Mammary epithelial cell (primary cell): ENCODE measurements at regions of chr4 and their contacts with region 1.

Region 1: DNA sequence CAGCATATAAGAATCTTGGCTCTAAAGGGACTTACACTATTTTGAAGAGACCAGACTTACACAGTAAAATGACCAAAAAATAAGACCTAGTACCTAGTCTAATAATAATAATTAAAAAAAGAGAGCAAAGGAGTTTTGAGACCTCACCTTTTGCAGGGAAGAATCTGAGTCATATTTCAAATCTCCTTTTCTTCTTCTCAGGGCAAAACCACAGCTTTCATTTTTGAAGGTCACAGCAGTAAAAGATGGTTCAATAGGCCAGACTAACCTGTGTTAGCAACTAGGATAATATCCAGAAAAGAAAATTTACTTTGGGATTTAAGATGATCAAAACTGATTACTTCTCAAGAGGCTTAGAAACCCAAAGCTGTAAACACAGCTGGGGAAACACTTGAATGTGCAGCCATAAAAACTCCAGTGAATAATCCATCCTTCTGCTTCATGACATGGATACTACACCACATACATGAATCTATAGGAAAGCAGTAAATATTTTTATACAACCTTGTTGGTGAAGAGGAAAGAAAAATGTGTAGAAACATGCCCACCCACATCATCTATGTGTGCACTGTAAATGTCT is 25.9 kb upstream of the LNX1 start:
- DNase-seq: no peak
- H3K4me3 ChIP-seq: no peak overlapping the region
- H3K27ac ChIP-seq: no peak overlapping the region
- H3K4me1 ChIP-seq: peaks cover 4% of the 10 kb centered on the region
- H3K27me3 ChIP-seq: no peaks in the 10 kb centered on the region
- CTCF ChIP-seq: no peak

Region 2: DNA sequence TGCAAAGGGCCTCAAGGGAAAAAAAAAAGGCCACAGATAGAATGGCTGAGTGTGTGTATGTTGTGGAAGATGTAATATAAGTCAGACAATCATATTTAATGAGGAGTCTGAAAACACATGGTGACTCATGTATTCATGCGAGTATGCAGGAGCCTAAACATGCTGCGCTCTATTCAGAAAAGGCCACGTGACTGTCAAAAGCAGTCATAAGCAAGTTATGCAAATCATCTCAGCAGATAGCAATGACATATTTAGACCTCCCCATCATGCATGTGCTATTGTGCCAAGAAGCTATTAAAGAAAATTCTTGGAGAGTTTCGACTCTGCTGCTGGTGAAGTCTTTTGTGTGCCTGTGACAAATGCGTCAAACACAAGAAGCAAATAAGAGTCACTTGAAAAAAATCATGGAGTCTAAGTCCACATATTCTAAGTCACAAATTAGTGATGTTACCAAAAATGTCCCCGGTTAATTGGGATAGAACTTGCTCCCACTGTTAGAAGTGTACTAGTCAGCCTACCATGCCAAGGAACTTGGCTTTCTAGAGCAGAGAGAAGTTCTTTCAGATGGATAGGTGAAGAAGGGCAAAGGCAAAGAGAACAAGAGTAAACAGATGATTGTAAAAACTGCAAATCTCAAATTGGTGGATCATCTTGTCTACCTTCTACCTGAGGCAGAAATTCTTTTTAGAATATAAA is 30.9 kb before region 1 on chr4:
- CTCF ChIA-PET with region 1: no interaction called
- dilution Hi-C with region 1: no loop called
- in situ Hi-C with region 1: no loop called
- intact Hi-C with region 1: no loop called
- DNase-seq: peak; percentile 74
- H3K4me3 ChIP-seq: no peak overlapping the region
- H3K27ac ChIP-seq: no peak overlapping the region
- H3K4me1 ChIP-seq: peaks cover 2% of the 10 kb centered on the region
- H3K27me3 ChIP-seq: no peaks in the 10 kb centered on the region
- CTCF ChIP-seq: no peak

Region 3: GRCh38 chr4:53659737-53660136 is 42.5 kb after region 1 on chr4:
- CTCF ChIA-PET with region 1: no interaction called
- dilution Hi-C with region 1: loop called (anchors 5 kb)
- in situ Hi-C with region 1: no loop called
- intact Hi-C with region 1: no loop called
- DNase-seq: no peak
- H3K4me3 ChIP-seq: no peak overlapping the region
- H3K27ac ChIP-seq: no peak overlapping the region
- H3K4me1 ChIP-seq: peaks cover under 1% of the 10 kb centered on the region
- H3K27me3 ChIP-seq: no peaks in the 10 kb centered on the region
- CTCF ChIP-seq: no peak